ENCODE measurements at regions of chr6 and their contacts with region 1.

Region 1: GRCh38 chr6:104771258-104771832 is 88.4 kb downstream of the HACE1 start:
- DNase-seq: peak in 1 of 2 experiments; percentile 43
- H3K4me3 ChIP-seq: no peak overlapping the region
- H3K4me1 ChIP-seq: peaks cover 7% of the 10 kb centered on the region; the same call in 1 of the 2 replicates
- H3K27me3 ChIP-seq: no peaks in the 10 kb centered on the region

Region 2: DNA sequence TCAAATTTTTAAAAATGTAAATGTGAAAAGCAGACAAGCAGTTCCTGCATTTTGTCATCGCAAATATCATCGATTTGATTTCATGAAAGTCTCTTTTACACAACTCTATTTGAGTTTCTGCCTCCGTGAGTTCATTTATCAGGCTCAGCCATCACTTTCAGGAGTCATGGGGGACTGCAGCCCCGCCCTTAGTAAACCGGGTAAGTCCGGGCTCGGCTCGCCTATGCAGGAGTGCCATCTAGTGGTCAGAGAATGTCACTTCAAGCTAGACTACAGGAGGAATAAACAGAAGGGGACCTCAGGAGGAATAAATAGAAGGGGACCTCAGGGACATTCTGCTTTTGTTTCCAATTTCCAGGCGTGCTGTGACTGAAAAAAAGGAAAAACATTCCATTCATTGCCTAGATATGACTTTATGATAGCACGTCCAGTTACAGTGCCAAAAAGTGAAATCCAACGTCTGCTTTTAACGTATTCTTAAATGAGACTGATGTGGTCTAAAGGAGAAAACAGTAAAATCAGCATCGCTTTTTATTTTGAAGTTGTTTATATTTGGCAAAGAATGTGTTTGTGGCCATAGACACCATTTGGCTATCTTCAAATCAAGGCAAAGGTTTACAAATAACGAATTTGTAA is 245.6 kb before region 1 on chr6:
- in situ Hi-C with region 1: loop called (anchors 10 kb)
- DNase-seq: peak; percentile 75 to 78
- H3K4me3 ChIP-seq: no peak overlapping the region
- H3K4me1 ChIP-seq: 0 out of 2 replicates have a peak, but pooled peaks cover 4% of the 10 kb centered on the region
- H3K27me3 ChIP-seq: peaks cover 9% of the 10 kb centered on the region

Region 3: DNA sequence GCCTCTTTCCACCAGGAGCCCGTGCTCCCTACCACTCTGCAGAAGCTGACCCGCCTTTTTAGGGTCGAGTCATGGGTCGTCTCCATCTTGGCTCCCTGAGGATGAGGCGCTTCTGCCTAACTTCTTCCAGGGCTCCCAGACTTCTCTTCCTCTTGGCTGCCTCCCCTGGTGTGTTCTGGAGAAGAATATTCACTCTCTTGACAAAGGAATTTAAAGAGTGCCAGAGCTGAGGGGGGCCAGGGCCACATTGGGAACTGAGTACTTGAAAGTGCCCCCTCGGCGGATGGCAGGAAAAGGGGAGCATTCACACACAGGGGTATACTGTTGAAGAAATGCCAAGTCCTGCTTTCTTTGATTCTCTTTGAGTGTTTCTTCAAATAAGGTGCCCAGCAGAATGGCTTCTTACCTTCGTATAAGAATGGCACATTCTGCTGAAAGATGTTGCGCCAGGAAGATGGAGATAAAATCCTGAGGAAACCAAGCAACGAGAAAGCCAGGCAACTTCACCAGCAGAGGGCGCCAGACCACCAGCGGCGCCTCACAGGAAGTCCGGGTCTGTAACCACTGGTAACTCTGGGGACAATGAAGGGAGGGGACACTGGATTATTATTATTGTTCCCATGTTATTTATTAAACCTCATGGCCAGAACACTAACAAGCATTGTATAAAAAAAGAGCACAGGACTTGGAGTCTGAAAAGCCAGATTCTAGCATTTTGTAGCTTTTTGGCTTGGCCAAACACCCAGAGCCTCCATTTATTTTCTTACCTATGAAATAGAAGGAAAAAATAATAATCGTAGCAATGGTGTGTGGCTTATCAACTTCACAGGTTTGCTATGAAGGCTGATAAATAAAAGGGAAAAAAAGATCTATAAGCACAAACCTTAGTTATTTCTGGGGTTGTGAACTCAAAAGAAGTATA is 88.4 kb before region 1 on chr6:
- in situ Hi-C with region 1: loop called (anchors 10 kb)
- DNase-seq: peak; percentile 65 to 87
- H3K4me3 ChIP-seq: no peak overlapping the region
- H3K4me1 ChIP-seq: peaks cover 7% of the 10 kb centered on the region; the same call in 1 of the 2 replicates
- H3K27me3 ChIP-seq: no peaks in the 10 kb centered on the region